ENCODE measurements at regions of chr11 and their contacts with region 1.

Region 1: DNA sequence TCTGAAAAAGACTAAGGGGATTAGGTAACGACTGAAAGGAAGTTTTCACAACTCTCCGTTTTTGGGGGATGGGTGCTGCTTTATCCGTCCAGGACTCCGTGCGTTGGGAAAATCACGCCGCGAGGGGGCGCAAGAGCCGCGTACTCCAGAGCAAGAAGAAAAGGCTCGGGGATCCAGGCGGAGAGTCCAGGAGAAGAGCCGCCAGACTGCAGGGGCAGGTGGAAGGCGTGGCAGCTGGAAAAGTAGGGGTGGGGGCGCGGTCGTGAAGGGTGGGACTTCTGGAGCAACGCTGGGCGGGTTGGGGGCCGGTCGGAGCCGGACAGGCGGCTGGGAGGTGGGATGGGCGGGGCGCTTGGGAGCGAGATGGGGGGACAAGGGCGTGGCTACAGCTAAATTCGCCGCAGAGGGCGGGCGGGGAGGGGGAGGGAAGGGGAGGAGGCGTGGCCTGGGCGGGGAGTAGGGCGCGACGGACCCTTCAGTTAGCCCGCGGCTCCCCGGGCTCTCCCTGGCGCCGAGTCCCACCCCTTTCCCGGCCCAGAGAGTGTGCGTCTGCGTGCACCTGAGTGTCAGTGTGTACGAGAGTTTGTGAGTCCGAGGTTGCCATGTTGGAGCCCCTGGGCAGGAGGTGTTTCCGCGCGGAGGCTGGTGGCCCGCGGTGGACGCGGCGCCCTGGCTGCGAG is 613 bp upstream of the ARHGEF17 start:
- DNase-seq: peak; percentile 97 to 98 (median 97)
- ATAC-seq: peak; percentile 65 to 77 (median 74)
- H3K4me3 ChIP-seq: peak overlapping the region; percentile 56 to 90 (median 74)
- H3K27ac ChIP-seq: peak overlapping the region; percentile 93 to 100 (median 98)
- H3K4me1 ChIP-seq: peaks cover 0 to 59% (median 35%) of the 10 kb centered on the region in 12 donors
- H3K27me3 ChIP-seq: peaks cover 0 to 15% (median 0%) of the 10 kb centered on the region in 9 donors
- CTCF ChIP-seq: peak; percentile 59 to 95 (median 82)
- POLR2A ChIP-seq: peak in 1 of 2 donors; percentile 10

Region 2: DNA sequence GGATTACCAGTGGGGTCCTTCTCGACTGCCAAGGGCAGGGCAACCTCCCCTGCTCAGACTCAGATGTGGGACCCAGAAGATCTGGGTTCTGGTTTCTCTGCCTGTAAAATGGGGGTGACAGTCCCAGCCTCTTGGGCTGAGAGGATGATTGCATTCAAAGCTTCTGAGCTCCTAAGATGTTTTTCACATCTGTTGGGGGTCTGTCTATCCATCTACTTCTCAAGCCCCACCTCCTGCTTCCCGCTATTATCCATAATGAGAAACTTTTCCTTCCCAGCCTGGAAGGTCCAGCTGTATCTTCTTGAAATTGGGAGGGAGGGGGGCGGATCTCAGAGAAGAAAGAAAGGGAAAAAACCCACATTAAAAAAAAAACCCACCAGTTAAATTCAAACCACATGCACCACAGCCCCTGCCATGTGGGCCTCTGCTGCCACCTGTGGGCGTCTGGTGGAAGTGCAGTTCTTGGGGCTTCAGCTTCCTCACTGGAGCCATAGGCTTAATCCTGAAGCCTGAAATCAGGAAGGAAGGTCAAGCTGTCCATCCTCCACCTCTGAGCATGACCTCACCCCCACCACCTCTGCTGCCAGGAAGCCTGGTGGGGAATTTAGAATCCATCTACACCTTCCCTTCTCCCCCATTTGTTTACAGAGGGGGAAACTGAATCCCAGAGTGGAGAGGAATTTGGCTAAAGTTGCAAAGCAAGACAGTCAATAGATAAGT is 27.9 kb after region 1 on chr11:
- intact Hi-C with region 1: loop called (anchors 1 kb)
- DNase-seq: peak; percentile 75 to 90 (median 83)
- ATAC-seq: peak; percentile 47 to 79 (median 64)
- H3K4me3 ChIP-seq: peak overlapping the region in 4 of 12 donors; percentile 5 to 28 (median 14)
- H3K27ac ChIP-seq: peak overlapping the region; percentile 27 to 87 (median 78)
- H3K4me1 ChIP-seq: peaks cover 13 to 78% (median 56%) of the 10 kb centered on the region in 12 donors
- H3K27me3 ChIP-seq: no peaks in the 10 kb centered on the region
- CTCF ChIP-seq: peak; percentile 93 to 100 (median 99)
- POLR2A ChIP-seq: no peak

Region 3: DNA sequence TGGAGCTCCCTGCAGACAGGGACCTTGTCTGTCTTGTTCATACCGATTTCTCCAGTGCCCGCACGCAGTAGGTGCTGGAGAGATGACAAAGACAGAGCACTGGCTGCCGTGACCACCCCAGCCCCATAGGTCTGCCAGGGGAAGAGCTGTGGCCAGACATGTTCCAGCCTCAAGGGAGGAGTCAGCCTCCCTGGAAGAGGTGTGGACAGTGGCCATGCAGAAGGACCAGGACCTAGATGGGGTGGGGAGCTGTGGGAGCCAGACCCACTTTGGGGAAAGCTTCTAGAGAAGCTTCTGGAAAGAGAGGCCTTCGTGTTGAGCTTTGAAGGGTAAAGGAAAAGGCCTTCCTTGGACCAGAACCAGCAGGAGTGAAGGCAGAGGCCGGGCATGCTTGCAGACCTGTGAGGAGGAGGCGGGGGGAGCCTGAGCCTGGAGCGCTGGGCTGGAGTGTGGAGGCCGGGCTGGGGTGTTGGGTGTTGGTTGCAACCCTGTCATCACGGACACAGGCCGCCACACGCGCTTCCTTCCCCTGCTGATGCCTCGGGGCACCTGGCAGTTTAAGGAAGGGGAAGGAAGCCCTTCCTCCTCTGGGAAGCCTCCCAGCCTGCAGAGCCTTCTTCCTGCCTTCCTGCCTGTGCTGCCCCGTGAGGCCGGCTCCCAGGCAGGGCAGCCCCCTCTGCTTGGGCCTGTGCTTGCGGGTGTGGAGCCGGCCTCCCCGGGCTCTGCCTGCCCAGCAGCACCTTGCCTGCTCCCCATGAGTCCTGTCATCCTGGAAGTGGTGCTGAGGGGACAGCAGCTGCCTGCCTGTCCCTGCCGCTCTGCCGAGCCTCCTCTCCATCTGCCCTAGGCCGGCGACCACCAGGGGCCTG is 81.0 kb after region 1 on chr11:
- intact Hi-C with region 1: loop called in 6 of 10 experiments (anchors 1 to 5 kb)
- DNase-seq: peak; percentile 63 to 86 (median 77)
- ATAC-seq: peak in 3 of 4 donors; percentile 43 to 62 (median 48)
- H3K4me3 ChIP-seq: no peak overlapping the region
- H3K27ac ChIP-seq: peak overlapping the region in 4 of 12 donors; percentile 22 to 96 (median 58)
- H3K4me1 ChIP-seq: peaks cover 0 to 82% (median 39%) of the 10 kb centered on the region in 12 donors
- H3K27me3 ChIP-seq: no peaks in the 10 kb centered on the region
- CTCF ChIP-seq: no peak
- POLR2A ChIP-seq: no peak

Region 4: DNA sequence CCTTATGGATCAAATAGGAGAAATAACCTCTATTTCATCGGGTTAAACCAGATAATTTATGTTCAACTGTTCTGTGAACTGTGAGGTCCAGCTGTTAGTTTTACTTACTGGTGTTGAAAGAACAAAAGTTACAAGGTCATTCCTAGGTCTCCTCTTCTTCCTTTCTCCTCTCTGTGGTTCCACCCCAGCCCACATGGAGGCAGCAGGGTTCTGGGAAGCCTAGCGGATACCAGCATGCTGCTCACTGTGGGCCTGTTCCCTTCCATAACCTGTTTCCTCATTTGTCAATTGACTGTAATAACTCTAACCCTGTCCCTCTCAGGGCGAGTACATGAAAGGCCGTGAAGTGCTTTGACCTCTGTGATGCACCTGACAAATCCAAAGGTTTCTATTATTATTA is 96.6 kb after region 1 on chr11:
- intact Hi-C with region 1: loop called in 1 of 10 experiments (anchors 5 kb)
- DNase-seq: peak; percentile 73 to 85 (median 79)
- ATAC-seq: peak; percentile 80 to 92 (median 88)
- H3K4me3 ChIP-seq: no peak overlapping the region
- H3K27ac ChIP-seq: peak overlapping the region in 8 of 12 donors; percentile 4 to 68 (median 24)
- H3K4me1 ChIP-seq: peaks cover 0 to 18% (median 11%) of the 10 kb centered on the region in 12 donors
- H3K27me3 ChIP-seq: no peaks in the 10 kb centered on the region
- CTCF ChIP-seq: peak; percentile 62 to 89 (median 80)
- POLR2A ChIP-seq: no peak

Region 5: DNA sequence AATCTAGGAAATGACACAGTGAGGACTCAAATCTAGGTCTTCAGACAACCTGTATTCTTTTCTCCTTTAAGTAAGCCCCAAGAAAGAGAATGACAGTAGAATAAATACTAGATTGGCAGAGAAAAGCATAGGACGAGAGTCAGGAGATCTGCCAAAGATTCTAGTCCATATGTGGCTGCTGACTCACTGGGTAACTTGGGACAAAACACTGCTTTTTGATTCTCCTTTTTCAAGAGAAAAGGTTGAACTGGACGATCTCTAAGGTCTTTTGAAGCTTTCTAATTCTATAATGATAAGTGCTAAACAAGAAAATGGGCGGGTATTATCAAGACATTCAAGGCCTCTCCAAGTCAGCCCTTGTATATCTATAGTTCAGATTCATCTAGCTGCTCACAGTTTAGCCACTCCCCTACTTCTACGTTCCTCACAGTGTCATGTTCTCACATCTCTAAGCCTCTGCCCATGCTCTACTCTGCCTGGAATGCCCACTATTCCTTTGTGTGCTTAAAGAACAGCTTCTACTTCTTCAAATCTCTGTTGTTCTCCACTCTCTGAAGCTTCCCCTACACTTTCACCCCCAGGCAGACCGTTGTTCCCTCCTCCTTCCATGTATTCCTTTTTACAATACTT is 121.8 kb after region 1 on chr11:
- intact Hi-C with region 1: no loop called
- DNase-seq: no peak
- ATAC-seq: no peak
- H3K4me3 ChIP-seq: no peak overlapping the region
- H3K27ac ChIP-seq: no peak overlapping the region
- H3K4me1 ChIP-seq: peaks cover 0 to 31% (median 12%) of the 10 kb centered on the region in 12 donors
- H3K27me3 ChIP-seq: no peaks in the 10 kb centered on the region
- CTCF ChIP-seq: no peak
- POLR2A ChIP-seq: no peak

Region 6: GRCh38 chr11:73661035-73661628 is 353.7 kb after region 1 on chr11:
- intact Hi-C with region 1: loop called in 1 of 10 experiments (anchors 5 kb)
- DNase-seq: peak; percentile 88 to 94 (median 89)
- ATAC-seq: peak; percentile 88 to 97 (median 96)
- H3K4me3 ChIP-seq: peak overlapping the region in 10 of 12 donors; percentile 23 to 56 (median 41)
- H3K27ac ChIP-seq: no peak overlapping the region
- H3K4me1 ChIP-seq: peaks cover 0 to 43% (median 27%) of the 10 kb centered on the region in 12 donors
- H3K27me3 ChIP-seq: no peaks in the 10 kb centered on the region
- CTCF ChIP-seq: peak; percentile 93 to 99 (median 98)
- POLR2A ChIP-seq: no peak

Measured in heart left ventricle (tissue), 16 donors.